ENCODE measurements at regions of chr7 and their contacts with region 1.

Region 1: GRCh38 chr7:87506246-87507180 is 31.0 kb upstream of the ABCB4 start:
- DNase-seq: no peak
- ATAC-seq: no peak
- H3K4me3 Mint-ChIP-seq: no peak overlapping the region
- H3K27ac Mint-ChIP-seq: no peak overlapping the region
- H3K4me1 Mint-ChIP-seq: peaks cover 10% of the 10 kb centered on the region
- H3K27me3 Mint-ChIP-seq: no peaks in the 10 kb centered on the region; the same call in 1 of the 2 replicates
- CTCF ChIP-seq: no peak

Region 2: GRCh38 chr7:87541648-87542195 is 35.2 kb after region 1 on chr7:
- CTCF ChIA-PET with region 1: no interaction called
- POLR2A ChIA-PET with region 1: no interaction called
- DNase-seq: no peak
- ATAC-seq: no peak
- H3K4me3 Mint-ChIP-seq: no peak overlapping the region
- H3K27ac Mint-ChIP-seq: no peak overlapping the region
- H3K4me1 Mint-ChIP-seq: no peaks in the 10 kb centered on the region
- H3K27me3 Mint-ChIP-seq: no peaks in the 10 kb centered on the region
- CTCF ChIP-seq: no peak

Region 3: GRCh38 chr7:87600130-87601124 is 93.9 kb after region 1 on chr7 and contains the start of gene ABCB1:
- CTCF ChIA-PET with region 1: interaction called, 10 read pairs
- POLR2A ChIA-PET with region 1: no interaction called
- DNase-seq: peak; percentile 64
- ATAC-seq: peak; percentile 98
- H3K4me3 Mint-ChIP-seq: peak within 1 kb of the TSS; percentile 78
- H3K27ac Mint-ChIP-seq: no peak within 1 kb of the TSS
- H3K4me1 Mint-ChIP-seq: 0 out of 2 replicates have a peak, but pooled peaks cover 10% of the 10 kb centered on the region
- H3K27me3 Mint-ChIP-seq: peaks cover 48% of the 10 kb centered on the region
- CTCF ChIP-seq: no peak
- total RNA-seq, gene ABCB1: 0.60 to 0.94 TPM (median 0.82 TPM) in 3 replicates